GM12878 (cell line): ENCODE measurements at regions of chr2 and their contacts with region 1.

Region 1: DNA sequence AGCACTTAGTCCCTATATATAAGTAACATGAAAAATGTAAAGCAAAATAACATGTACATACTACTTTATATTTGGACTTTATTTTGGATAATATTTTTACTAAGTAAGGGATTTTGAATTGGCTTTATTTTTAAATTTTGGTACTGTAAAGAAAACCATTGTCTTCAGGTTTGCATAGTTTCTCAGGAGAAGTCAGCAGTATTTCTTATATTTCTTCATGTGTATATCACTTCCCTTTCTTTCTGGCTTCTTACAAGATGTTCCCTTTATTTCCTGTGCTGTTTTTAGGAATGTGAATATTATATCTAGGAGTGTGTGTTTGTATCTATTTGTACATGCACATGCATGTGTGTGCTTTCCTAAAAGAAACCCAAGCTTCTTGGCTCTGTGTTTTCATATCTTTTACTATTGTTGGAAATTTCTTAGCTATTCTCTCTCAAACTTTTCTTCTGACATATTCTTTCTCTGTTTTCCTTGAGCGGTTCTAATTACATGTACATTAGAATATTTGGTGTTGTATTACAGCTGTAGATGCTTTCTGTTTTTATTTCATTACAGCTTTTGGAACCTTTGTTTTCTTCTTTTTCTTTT is 1549.7 kb upstream of the ACVR2A start:
- DNase-seq: no peak
- ATAC-seq: no peak
- H3K4me3 ChIP-seq: no peak overlapping the region
- H3K27ac ChIP-seq: no peak overlapping the region
- H3K4me1 ChIP-seq: no peaks in the 10 kb centered on the region
- H3K27me3 ChIP-seq: no peaks in the 10 kb centered on the region
- CTCF ChIP-seq: no peak
- EP300 ChIP-seq: no peak
- POLR2A ChIP-seq: no peak
- RAD21 ChIP-seq: no peak

Region 2: GRCh38 chr2:146158072-146158674 is 137.0 kb before region 1 on chr2:
- CTCF ChIA-PET with region 1: no interaction called
- POLR2A ChIA-PET with region 1: no interaction called
- RAD21 ChIA-PET with region 1: no interaction called
- SMC1A ChIA-PET with region 1: no interaction called
- in situ Hi-C with region 1: no loop called
- intact Hi-C with region 1: loop called (anchors 10 kb)
- DNase-seq: no peak
- ATAC-seq: no peak
- H3K4me3 ChIP-seq: no peak overlapping the region
- H3K27ac ChIP-seq: no peak overlapping the region
- H3K4me1 ChIP-seq: no peaks in the 10 kb centered on the region
- H3K27me3 ChIP-seq: no peaks in the 10 kb centered on the region
- CTCF ChIP-seq: no peak
- EP300 ChIP-seq: no peak
- POLR2A ChIP-seq: no peak
- RAD21 ChIP-seq: no peak